ENCODE measurements at regions of chr10 and their contacts with region 1.

Region 1: DNA sequence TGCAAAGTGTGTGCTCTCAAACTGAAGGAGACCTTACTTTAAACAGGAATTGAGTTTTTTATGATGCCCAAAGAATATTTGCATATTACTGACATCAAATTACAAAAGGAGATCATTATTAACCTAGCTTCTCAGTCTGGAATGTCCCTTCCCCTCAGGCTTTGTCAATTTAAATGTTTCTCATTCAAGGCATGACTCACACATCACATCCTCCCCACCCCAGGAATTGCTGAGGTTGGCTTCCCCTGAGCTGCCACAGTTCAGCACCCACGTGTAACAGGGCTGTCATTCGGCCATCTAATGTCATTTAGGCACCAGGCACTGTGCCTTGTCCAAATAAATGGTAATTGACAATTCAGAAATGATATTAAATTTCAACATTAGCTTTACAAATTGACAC is 305.9 kb upstream of the MGMT start:
- DNase-seq: peak; percentile 9
- H3K4me3 ChIP-seq: no peak overlapping the region
- CTCF ChIP-seq: no peak

Region 2: GRCh38 chr10:129193148-129193547 is 32.0 kb after region 1 on chr10:
- in situ Hi-C with region 1: no loop called
- DNase-seq: no peak
- H3K4me3 ChIP-seq: no peak overlapping the region
- CTCF ChIP-seq: no peak

Region 3: DNA sequence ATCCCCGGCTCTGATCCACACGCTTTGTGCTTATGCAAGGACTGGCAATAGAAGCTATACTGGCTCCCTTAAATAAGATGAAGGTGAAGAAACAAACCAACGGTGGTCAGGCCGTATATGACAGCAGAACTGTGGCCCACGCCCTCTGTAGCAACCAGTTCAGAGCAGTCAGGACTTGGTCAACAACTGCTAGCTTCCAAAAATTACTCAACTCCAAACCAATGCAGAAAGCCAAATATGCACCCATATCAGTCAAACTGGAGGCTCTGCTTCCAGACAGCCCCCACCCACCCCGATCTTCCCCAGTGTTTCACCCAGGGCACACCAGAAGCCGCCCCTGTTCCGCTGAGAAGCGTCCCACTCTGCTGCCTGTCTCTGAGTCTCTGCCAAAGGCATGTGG is 83.6 kb after region 1 on chr10:
- in situ Hi-C with region 1: loop called (anchors 5 kb)
- DNase-seq: no peak
- H3K4me3 ChIP-seq: no peak overlapping the region
- CTCF ChIP-seq: no peak

Region 4: GRCh38 chr10:129440247-129440646 is 279.1 kb after region 1 on chr10:
- in situ Hi-C with region 1: no loop called
- DNase-seq: no peak
- H3K4me3 ChIP-seq: no peak overlapping the region
- CTCF ChIP-seq: no peak